ENCODE measurements at regions of chr3 and their contacts with region 1.

Region 1: DNA sequence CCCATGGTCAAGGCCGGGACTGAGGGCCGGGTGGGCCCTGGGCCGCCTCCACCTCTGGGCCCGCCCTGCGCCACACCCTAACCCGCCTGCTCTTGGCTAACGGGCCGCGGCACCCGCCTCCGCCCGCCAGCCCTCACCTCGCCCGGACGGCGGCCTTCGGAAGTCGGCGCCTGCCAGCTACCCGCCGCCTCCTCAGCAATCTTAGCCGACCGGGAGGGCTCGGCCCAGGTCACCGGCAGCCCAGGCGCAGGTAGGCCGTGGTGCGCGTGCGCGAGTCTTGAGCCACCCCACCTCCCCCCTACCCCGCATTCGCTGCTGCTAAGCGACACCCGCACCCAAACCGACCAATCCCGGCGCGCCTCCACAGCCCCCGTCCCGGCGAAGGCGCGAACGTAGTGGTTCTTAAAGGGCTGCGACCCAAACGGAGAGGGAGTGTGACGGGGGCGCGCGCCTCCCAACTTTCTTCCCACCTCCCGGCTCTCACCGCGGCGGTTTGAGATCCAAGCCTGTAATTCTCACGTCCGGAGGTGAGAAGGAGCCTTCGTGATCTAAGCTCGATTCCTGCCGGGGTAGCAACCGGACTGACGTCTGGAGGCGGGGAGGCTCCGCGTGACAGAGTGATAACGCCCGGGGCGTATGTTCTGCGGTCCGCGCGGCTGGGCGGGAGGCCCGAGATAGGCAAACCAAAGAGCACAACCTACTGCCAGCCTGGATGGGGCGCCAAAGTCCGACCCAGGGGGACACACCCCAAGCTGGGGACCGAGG is at the start of gene SEC22C:
- DNase-seq: peak; percentile 73
- ATAC-seq: peak; percentile 96
- H3K4me3 ChIP-seq: peak within 1 kb of the TSS; percentile 94
- H3K27ac ChIP-seq: peak within 1 kb of the TSS; percentile 75
- H3K4me1 ChIP-seq: peaks cover 7% of the 10 kb centered on the region
- H3K27me3 ChIP-seq: no peaks in the 10 kb centered on the region
- CTCF ChIP-seq: peak; percentile 42 to 66 (median 47); a peak in 5 of 6 replicates
- EP300 ChIP-seq: no peak
- POLR2A ChIP-seq: peak; percentile 88
- RAD21 ChIP-seq: peak; percentile 70
- polyA plus RNA-seq, gene SEC22C: 15.6 to 19.3 TPM

Region 2: GRCh38 chr3:42600111-42600988 is 18.5 kb after region 1 on chr3 and contains the start of gene NKTR:
- CTCF ChIA-PET with region 1: interaction called, 38 read pairs
- POLR2A ChIA-PET with region 1: interaction called, 33 read pairs
- RAD21 ChIA-PET with region 1: interaction called, 13 read pairs
- SMC1A ChIA-PET with region 1: interaction called, 26 read pairs
- in situ Hi-C with region 1: no loop called
- intact Hi-C with region 1: no loop called
- DNase-seq: peak; percentile 98
- ATAC-seq: peak; percentile 87
- H3K4me3 ChIP-seq: peak within 1 kb of the TSS; percentile 97
- H3K27ac ChIP-seq: peak within 1 kb of the TSS; percentile 95
- H3K4me1 ChIP-seq: peaks cover 3% of the 10 kb centered on the region; the same call in 1 of the 2 replicates
- H3K27me3 ChIP-seq: no peaks in the 10 kb centered on the region
- CTCF ChIP-seq: 0 out of 6 replicates have a peak, but pooled peaks of 2 of the 3 experiments have one; percentile 0 to 1
- EP300 ChIP-seq: no peak
- POLR2A ChIP-seq: peak; percentile 94
- RAD21 ChIP-seq: no peak
- polyA plus RNA-seq, gene NKTR: 15.3 to 27.8 TPM

Region 3: DNA sequence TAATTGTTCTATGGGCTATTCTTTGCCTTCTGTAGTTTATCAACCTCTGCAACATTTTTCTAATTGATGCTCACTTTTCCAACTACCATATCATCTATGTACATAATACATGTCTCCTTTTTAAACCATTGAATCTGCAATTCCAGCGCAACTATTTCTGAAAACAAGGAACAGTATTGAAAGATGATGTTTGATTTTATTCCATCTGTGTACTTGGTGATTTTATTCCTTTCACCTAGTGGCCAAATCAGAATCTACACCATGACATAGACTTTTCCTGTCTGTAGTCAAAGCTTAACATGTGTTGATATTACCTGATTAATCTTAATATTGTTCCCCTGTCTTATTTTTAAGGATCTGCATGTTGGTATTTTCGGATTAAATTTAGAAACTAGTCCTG is 31.6 kb after region 1 on chr3:
- CTCF ChIA-PET with region 1: interaction called, 35 read pairs
- POLR2A ChIA-PET with region 1: no interaction called
- RAD21 ChIA-PET with region 1: interaction called, 13 read pairs
- SMC1A ChIA-PET with region 1: interaction called, 15 read pairs
- in situ Hi-C with region 1: no loop called
- intact Hi-C with region 1: no loop called
- DNase-seq: no peak
- ATAC-seq: peak; percentile 70
- H3K4me3 ChIP-seq: no peak overlapping the region
- H3K27ac ChIP-seq: no peak overlapping the region
- H3K4me1 ChIP-seq: peaks cover 3% of the 10 kb centered on the region; the same call in 1 of the 2 replicates
- H3K27me3 ChIP-seq: no peaks in the 10 kb centered on the region
- CTCF ChIP-seq: peak; percentile 16 to 36 (median 34); a peak in 4 of 6 replicates
- EP300 ChIP-seq: no peak
- POLR2A ChIP-seq: no peak
- RAD21 ChIP-seq: no peak

Region 4: DNA sequence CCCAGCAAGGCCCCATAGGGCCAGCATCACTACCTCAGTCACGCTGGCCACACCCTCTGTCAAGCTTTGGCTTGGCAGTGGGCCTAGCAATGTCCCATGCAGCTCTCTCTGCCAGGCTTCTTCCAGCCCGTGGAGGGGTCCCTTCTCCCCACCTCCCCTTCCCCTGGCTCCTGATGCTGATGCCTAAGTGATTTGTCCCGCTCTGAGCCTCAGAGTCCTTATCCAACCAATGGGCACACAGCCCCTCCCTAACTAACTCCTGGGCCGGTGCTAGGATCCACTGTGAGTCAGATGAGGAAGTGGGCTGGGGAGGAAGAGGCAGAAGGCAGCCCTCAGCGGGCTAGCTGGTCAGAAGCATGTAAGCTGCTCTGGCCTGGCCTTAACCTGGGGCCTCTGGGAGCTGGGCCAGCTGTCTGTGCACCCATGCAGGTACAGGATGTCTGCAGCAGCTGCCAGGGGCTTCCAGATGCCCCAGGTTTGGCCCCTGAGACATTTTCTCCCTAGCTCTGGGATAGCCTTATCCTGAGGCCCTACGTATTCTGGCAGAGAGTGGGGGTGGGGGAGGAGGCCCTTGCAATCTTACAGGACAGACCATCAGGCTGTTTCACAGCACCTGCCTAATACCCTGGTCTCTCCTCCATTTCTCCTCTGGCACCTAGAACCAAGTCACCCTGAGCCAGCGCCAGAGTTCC is 70.9 kb after region 1 on chr3:
- CTCF ChIA-PET with region 1: interaction called, 4 read pairs
- POLR2A ChIA-PET with region 1: interaction called, 17 read pairs
- RAD21 ChIA-PET with region 1: interaction called, 3 read pairs
- SMC1A ChIA-PET with region 1: interaction called, 11 read pairs
- in situ Hi-C with region 1: no loop called
- intact Hi-C with region 1: no loop called
- DNase-seq: peak; percentile 16
- ATAC-seq: peak; percentile 84
- H3K4me3 ChIP-seq: peak overlapping the region; percentile 73; the same call in 1 of the 2 replicates
- H3K27ac ChIP-seq: peak overlapping the region; percentile 48
- H3K4me1 ChIP-seq: peaks cover 17% of the 10 kb centered on the region
- H3K27me3 ChIP-seq: no peaks in the 10 kb centered on the region
- CTCF ChIP-seq: no peak
- EP300 ChIP-seq: no peak
- POLR2A ChIP-seq: peak; percentile 73
- RAD21 ChIP-seq: no peak

Region 5: DNA sequence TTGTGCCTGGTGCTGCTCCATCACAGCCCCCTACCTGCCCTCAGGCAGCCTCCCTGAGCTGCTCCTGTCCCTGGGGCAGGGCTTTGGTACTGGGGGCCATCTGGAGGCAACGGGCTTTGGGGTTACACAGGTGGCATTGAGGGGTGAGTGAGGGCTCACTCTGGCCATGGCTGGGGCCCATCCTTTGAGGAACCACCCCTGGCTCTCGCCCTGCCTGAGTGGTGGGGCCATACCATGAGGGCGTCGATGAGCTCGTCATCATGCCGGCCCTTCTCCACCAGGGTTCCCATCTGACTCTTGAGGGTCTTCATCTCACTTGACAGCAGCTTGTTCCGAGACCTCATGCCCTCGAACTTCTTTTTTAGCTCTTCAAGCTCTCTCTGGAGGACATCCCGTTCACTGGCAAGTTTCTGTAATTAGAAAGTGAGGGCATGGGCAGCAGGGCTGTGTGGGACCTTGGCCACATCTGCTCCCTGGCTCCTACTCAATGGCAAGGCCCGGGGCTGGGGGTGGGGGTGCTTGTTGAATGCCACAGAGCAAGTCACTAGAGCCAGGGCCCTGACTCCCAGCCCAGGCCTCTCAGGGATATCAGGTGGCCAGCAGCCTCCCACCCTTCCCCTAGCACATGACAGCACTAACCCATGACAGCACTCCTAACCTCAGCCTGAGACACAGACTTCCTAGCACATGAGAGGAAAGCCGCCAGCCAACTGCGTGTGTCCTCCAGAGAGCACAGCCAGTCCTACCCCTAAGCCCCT is 157.7 kb after region 1 on chr3:
- CTCF ChIA-PET with region 1: interaction called, 30 read pairs
- POLR2A ChIA-PET with region 1: no interaction called
- RAD21 ChIA-PET with region 1: interaction called, 15 read pairs
- SMC1A ChIA-PET with region 1: interaction called, 27 read pairs
- in situ Hi-C with region 1: loop called (anchors 10 kb)
- intact Hi-C with region 1: no loop called
- DNase-seq: no peak
- ATAC-seq: no peak
- H3K4me3 ChIP-seq: no peak overlapping the region
- H3K27ac ChIP-seq: no peak overlapping the region
- H3K4me1 ChIP-seq: no peaks in the 10 kb centered on the region
- H3K27me3 ChIP-seq: no peaks in the 10 kb centered on the region
- CTCF ChIP-seq: no peak
- EP300 ChIP-seq: no peak
- POLR2A ChIP-seq: no peak
- RAD21 ChIP-seq: no peak

Region 6: GRCh38 chr3:42749753-42750231 is 167.9 kb after region 1 on chr3:
- CTCF ChIA-PET with region 1: interaction called, 30 read pairs
- POLR2A ChIA-PET with region 1: no interaction called
- RAD21 ChIA-PET with region 1: interaction called, 15 read pairs
- SMC1A ChIA-PET with region 1: interaction called, 27 read pairs
- in situ Hi-C with region 1: loop called (anchors 10 kb)
- intact Hi-C with region 1: no loop called
- DNase-seq: no peak
- ATAC-seq: peak; percentile 59
- H3K4me3 ChIP-seq: no peak overlapping the region
- H3K27ac ChIP-seq: no peak overlapping the region
- H3K4me1 ChIP-seq: no peaks in the 10 kb centered on the region
- H3K27me3 ChIP-seq: no peaks in the 10 kb centered on the region
- CTCF ChIP-seq: peak; percentile 43 to 54 (median 53); a peak in 5 of 6 replicates
- EP300 ChIP-seq: no peak
- POLR2A ChIP-seq: no peak
- RAD21 ChIP-seq: peak; percentile 46